Activated naive CD4-positive, alpha-beta T cell treated with anti-CD3 and anti-CD28 coated beads for 36 hours (primary cell): ENCODE measurements at regions of chr5 and their contacts with region 1.

Region 1: DNA sequence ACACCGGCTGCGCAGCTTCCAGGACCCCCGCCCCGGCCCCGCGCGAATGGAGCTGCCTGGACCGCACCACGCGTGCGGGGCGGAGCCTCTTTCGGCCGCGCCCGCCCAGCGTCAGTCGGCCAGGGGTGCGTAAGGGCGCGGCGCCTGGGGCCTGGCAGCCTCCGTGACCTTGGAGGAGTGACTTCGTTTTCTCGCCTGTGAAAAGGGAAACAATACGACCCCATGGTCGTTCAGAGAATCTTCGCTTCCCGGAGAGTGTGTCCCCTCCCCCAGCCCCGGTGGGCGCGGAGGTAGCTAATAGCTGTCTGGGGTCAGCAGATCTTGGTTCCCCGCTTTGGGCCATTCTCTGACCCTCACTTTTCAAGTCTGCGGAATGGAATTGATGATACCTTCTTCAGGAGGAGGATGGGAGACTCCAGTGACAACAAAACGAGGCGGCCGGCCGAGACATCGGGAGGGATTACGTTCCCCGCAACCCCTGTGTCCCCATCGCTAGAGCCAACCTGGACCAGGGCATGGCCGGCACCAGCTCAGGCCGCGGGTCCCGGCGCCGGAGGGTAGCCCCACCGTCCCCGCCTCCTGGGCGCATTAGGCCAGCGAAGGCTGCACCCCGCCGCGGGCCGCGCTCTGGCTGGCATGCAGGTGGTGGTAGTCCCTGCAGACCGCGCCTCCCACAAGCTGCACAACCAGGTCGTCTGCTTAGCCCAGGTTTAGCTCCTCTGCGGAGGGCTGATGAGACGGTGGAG is 5.5 kb upstream of the CDHR2 start:
- DNase-seq: peak; percentile 75
- H3K4me3 Mint-ChIP-seq: peak overlapping the region; percentile 88
- H3K27ac Mint-ChIP-seq: peak overlapping the region; percentile 93
- H3K4me1 Mint-ChIP-seq: peaks cover 63% of the 10 kb centered on the region
- H3K27me3 Mint-ChIP-seq: no peaks in the 10 kb centered on the region

Region 2: GRCh38 chr5:176388444-176389134 is 155.0 kb before region 1 on chr5 and contains the starts of genes HIGD2A and NOP16:
- CTCF ChIA-PET with region 1: no interaction called
- intact Hi-C with region 1: loop called (anchors 1 kb)
- DNase-seq: peak; percentile 100
- H3K4me3 Mint-ChIP-seq: peak within 1 kb of the TSS; percentile 100
- H3K27ac Mint-ChIP-seq: peak within 1 kb of the TSS; percentile 100
- H3K4me1 Mint-ChIP-seq: peaks cover 33% of the 10 kb centered on the region
- H3K27me3 Mint-ChIP-seq: no peaks in the 10 kb centered on the region
- total RNA-seq, gene HIGD2A: 154 to 155 TPM
- total RNA-seq, gene NOP16: 42.1 to 43.1 TPM

Region 3: DNA sequence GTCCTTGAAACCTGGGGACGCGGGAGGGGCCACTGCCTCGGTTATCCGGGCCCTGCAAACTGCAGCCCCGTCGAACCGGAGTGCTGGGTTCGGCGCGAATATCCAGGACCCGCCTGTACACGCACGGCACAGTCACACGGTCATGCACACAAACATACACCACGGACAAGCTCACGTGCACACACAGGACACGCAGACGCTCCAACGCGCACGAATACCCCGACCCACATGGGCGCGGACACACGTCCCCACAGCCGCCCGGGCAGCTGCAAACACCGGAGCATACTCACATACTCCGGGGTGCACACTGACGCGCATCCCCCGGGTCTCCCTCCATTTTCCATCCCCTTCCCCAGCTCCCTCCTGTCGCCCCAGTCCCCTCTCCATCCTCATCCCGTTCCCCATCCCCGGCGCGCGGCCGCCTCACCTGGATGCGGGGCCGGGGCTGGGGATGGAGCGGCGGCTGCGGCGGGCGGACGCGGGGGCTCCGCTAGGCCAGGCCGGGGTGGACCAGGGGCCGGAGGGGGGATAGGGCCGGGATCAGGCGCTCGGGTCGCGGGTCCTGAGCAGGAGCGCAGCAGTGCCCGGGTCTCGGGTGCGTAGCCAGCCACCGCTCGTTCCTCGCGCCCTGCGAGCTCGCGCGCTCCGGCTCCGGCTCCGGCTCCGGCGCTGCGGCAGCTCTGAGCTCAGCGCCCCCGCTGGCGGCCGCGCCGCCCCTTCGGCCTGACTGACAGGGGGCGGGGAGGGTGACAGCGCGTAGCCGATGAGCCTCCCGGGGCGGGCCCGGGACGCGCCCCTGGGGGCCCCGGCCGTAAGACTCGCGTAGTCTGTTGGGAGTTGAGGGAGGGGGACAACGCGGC is 86.5 kb after region 1 on chr5 and contains the starts of genes EIF4E1B and SNCB:
- CTCF ChIA-PET with region 1: no interaction called
- intact Hi-C with region 1: no loop called
- DNase-seq: peak; percentile 59
- H3K4me3 Mint-ChIP-seq: peak within 1 kb of the TSS; percentile 46
- H3K27ac Mint-ChIP-seq: no peak within 1 kb of the TSS
- H3K4me1 Mint-ChIP-seq: peaks cover 12% of the 10 kb centered on the region
- H3K27me3 Mint-ChIP-seq: peaks cover 65% of the 10 kb centered on the region
- total RNA-seq, gene EIF4E1B: not detected
- total RNA-seq, gene SNCB: not detected

Region 4: GRCh38 chr5:177022384-177023308 is 479.0 kb after region 1 on chr5 and contains the start of gene ZNF346:
- CTCF ChIA-PET with region 1: no interaction called
- intact Hi-C with region 1: loop called (anchors 5 kb)
- DNase-seq: peak; percentile 95
- H3K4me3 Mint-ChIP-seq: peak within 1 kb of the TSS; percentile 99
- H3K27ac Mint-ChIP-seq: peak within 1 kb of the TSS; percentile 91
- H3K4me1 Mint-ChIP-seq: peaks cover 39% of the 10 kb centered on the region
- H3K27me3 Mint-ChIP-seq: no peaks in the 10 kb centered on the region
- total RNA-seq, gene ZNF346: 13.4 to 15.1 TPM